ENCODE measurements at regions of chr18 and their contacts with region 1.

Region 1: GRCh38 chr18:9661564-9661963 is 46.5 kb upstream of the RAB31 start:
- DNase-seq: no peak
- H3K4me3 ChIP-seq: no peak overlapping the region
- H3K27ac ChIP-seq: no peak overlapping the region
- H3K4me1 ChIP-seq: peaks cover 27% of the 10 kb centered on the region
- H3K27me3 ChIP-seq: no peaks in the 10 kb centered on the region
- CTCF ChIP-seq: peak; percentile 21 to 54

Region 2: DNA sequence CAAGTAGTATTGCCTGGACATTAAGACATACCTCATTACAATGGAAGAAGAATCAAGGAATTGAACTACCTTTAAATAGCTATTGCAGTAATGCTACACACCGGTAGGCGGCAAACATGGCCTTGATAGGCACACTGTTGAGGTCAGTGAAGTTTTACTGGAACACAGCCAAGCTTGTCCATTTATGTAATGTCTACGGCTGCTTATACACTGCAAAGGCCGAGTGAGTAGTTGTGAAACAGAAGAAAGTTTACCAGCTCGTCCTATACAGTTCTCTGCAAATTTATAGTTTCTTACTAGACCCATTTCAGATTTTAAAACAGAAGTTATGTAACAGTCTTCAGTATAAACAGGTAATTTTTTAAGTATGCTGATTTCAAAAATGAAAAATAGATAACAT is 86.0 kb before region 1 on chr18:
- CTCF ChIA-PET with region 1: interaction called, 15 read pairs
- dilution Hi-C with region 1: no loop called
- in situ Hi-C with region 1: no loop called
- intact Hi-C with region 1: no loop called
- DNase-seq: peak; percentile 74
- H3K4me3 ChIP-seq: no peak overlapping the region
- H3K27ac ChIP-seq: peak overlapping the region; percentile 34
- H3K4me1 ChIP-seq: peaks cover 5% of the 10 kb centered on the region
- H3K27me3 ChIP-seq: no peaks in the 10 kb centered on the region
- CTCF ChIP-seq: peak; percentile 89 to 99

Region 3: DNA sequence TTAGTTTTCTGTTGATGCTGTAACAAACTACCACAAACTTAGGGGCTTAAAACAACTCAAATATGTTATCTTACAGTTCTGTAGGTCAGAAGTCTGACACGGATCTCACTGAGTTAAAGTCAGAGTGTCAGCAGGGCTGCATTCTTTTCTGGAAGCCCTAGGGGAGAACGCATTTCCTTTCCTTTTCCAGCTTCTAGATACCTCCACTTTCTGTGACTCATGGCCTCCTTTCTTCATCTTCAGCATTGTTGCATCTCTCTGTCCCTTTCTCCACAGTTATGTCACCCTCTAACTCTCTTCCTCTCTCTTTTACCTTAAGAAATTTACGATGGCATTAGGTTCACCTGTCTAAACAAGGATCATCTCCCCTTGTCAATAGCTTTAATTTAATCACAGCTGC is 33.9 kb before region 1 on chr18:
- CTCF ChIA-PET with region 1: interaction called, 4 read pairs
- dilution Hi-C with region 1: no loop called
- in situ Hi-C with region 1: no loop called
- intact Hi-C with region 1: loop called (anchors 1 kb)
- DNase-seq: peak; percentile 70
- H3K4me3 ChIP-seq: no peak overlapping the region
- H3K27ac ChIP-seq: peak overlapping the region; percentile 66
- H3K4me1 ChIP-seq: peaks cover 18% of the 10 kb centered on the region
- H3K27me3 ChIP-seq: no peaks in the 10 kb centered on the region
- CTCF ChIP-seq: no peak

Region 4: DNA sequence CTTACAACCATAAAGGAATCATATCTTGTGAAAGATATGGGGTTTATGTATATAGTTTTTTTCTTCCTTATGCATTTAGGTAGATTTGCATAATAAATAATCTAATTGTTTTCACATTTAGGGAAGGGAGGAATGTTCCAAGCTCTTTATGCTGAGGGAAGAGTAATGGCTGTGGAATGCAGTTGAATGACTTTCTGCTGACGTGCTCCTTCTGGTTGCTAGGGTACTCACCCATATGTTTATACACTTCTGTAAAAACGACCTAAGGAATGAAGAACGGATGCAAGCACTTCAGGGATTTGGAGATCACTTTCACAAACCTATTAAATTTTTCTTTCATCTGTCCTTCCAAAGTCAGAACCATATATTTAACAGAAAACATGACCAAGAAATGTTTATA is 18.0 kb before region 1 on chr18:
- CTCF ChIA-PET with region 1: interaction called, 18 read pairs
- dilution Hi-C with region 1: no loop called
- in situ Hi-C with region 1: no loop called
- intact Hi-C with region 1: loop called (anchors 1 kb)
- DNase-seq: peak; percentile 92
- H3K4me3 ChIP-seq: peak overlapping the region in 1 of 3 experiments; percentile 17
- H3K27ac ChIP-seq: peak overlapping the region; percentile 100
- H3K4me1 ChIP-seq: peaks cover 41% of the 10 kb centered on the region
- H3K27me3 ChIP-seq: no peaks in the 10 kb centered on the region
- CTCF ChIP-seq: no peak

Region 5: DNA sequence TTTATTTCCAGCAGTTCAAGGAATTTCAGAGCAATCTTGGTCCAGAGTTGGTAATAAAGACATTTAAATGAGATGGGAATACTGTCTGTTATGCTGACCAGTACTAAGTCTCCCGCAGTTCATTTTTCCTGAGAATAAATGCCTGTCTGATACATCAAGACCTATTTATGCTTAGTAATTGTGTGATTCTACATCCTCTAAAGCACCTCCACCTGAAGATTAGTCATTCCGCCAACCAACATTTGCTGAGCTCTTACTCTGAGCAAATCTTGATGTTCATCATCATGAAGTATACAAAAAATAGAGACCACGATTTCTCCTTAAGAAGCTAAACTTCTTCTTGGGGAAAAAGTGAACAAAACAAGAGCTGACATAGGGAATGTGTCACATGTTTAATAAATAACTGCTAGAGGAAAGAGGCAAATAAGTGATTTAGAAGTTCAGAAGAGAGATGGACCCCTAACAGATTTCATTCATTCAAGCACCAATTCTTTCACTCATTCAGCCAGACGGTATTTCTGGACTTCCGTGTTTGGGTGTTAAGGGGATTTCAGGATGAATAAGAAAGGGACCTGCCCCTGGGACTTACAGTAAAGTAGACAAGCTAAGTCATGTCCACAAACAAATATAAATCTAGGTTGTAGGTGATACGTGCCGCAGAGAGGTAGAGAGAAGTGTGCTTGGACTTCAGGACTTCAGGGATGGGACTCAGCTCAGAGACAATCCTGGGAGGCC is 13.0 kb before region 1 on chr18:
- CTCF ChIA-PET with region 1: interaction called, 18 read pairs
- dilution Hi-C with region 1: no loop called
- in situ Hi-C with region 1: no loop called
- intact Hi-C with region 1: loop called (anchors 1 kb)
- DNase-seq: peak; percentile 84
- H3K4me3 ChIP-seq: no peak overlapping the region
- H3K27ac ChIP-seq: peak overlapping the region; percentile 86
- H3K4me1 ChIP-seq: peaks cover 34% of the 10 kb centered on the region
- H3K27me3 ChIP-seq: no peaks in the 10 kb centered on the region
- CTCF ChIP-seq: no peak

Region 6: DNA sequence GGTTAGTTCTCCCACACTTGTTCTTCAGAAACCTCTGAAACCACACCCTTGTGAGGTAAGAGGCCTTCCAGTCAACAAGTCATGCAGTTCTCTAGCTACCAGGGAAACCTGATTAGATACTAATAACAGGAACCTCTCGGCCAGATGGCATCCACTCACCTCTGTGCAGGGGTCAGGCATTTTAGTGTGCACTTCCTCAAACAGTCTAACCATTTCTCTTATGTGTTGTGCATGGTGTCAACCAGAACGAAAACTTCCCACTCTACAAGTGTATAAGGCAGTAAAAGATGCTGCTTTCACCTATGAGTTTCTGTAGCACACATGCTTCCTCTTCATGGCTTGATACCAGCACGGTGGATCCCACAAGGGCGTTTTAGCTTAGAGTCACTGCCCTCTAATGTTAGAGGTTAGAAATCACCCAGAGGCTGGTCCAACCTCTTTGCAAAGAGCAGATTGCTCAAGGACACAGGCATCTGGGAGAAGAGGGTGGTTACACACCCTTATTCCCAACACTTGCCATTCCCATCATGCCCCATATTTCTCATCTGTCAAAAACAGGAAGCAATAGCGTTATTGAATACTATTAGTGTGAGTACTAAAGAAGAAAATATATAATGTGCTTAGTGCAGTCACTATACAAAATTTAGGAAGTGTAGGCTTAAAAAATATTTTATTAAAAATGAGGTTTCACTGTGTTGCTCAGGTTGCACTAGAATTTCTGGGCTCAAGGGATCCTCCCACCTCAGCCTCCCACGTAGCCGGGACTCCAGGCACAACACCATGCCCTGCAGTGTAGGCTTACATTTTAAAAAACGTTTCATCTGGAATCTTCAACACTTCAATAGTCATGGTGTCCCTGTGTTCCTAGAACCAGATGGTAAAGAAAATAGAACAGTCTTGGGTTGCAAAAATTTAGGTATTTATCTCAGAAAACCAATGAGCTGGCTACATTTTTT is 12.0 kb after region 1 on chr18:
- CTCF ChIA-PET with region 1: interaction called, 4 read pairs
- dilution Hi-C with region 1: no loop called
- in situ Hi-C with region 1: no loop called
- intact Hi-C with region 1: loop called (anchors 1 kb)
- DNase-seq: peak; percentile 99
- H3K4me3 ChIP-seq: no peak overlapping the region
- H3K27ac ChIP-seq: peak overlapping the region; percentile 95
- H3K4me1 ChIP-seq: peaks cover 33% of the 10 kb centered on the region
- H3K27me3 ChIP-seq: no peaks in the 10 kb centered on the region
- CTCF ChIP-seq: peak; percentile 27 to 51

Region 7: GRCh38 chr18:9711361-9712129 is 50.0 kb after region 1 on chr18:
- CTCF ChIA-PET with region 1: no interaction called
- dilution Hi-C with region 1: loop called (anchors 5 kb)
- in situ Hi-C with region 1: no loop called
- intact Hi-C with region 1: no loop called
- DNase-seq: no peak
- H3K4me3 ChIP-seq: no peak overlapping the region
- H3K27ac ChIP-seq: no peak overlapping the region
- H3K4me1 ChIP-seq: peaks cover 15% of the 10 kb centered on the region
- H3K27me3 ChIP-seq: no peaks in the 10 kb centered on the region
- CTCF ChIP-seq: no peak